Activated CD8-positive, alpha-beta T cell treated with anti-CD3 and anti-CD28 coated beads, Interleukin-2, amount 10 ng/mL, durations not matched to agents 7 days and 5 days (primary cell): ENCODE measurements at regions of chr5 and their contacts with region 1.

Region 1: DNA sequence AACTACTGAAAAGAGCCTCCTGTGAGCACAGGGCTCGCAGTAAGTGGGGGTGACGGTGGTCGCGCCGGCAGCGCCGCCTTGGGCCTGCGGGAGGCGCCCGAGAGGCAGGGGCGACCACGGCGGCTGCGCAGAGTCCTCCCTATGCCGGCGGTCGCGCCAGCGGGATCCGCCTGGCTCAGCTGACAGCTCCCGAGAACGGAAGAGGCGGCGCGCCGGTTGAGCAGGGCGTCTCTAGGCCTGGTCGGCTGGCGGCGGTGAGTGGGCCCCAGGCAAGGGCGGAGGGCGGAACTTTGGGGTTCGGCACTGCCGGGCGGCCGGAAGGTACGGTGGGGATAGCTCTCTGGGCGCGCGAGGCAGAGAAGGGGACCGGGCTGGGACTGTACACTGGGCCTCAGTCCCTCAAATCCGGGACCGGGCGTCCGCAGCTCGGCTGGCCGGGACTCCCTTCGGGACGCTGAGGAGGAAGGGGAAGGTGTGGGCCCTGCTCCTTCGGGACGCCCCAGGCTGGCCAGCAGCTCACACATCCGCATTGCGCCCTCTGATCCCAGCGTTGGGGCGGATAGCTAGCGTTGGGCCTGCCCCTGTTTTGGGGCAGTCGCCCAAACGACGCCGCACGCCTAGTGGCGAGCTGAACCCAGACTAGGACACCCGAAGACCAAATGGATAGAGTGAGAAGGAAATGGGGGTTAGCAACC is at the start of gene RNF14:
- DNase-seq: peak; percentile 96
- ATAC-seq: peak; percentile 98
- H3K4me3 Mint-ChIP-seq: peak within 1 kb of the TSS; percentile 92
- H3K27ac Mint-ChIP-seq: peak within 1 kb of the TSS; percentile 95
- H3K4me1 Mint-ChIP-seq: peaks cover 33% of the 10 kb centered on the region
- H3K27me3 Mint-ChIP-seq: no peaks in the 10 kb centered on the region
- total RNA-seq, gene RNF14: 22.2 to 26.0 TPM

Region 2: DNA sequence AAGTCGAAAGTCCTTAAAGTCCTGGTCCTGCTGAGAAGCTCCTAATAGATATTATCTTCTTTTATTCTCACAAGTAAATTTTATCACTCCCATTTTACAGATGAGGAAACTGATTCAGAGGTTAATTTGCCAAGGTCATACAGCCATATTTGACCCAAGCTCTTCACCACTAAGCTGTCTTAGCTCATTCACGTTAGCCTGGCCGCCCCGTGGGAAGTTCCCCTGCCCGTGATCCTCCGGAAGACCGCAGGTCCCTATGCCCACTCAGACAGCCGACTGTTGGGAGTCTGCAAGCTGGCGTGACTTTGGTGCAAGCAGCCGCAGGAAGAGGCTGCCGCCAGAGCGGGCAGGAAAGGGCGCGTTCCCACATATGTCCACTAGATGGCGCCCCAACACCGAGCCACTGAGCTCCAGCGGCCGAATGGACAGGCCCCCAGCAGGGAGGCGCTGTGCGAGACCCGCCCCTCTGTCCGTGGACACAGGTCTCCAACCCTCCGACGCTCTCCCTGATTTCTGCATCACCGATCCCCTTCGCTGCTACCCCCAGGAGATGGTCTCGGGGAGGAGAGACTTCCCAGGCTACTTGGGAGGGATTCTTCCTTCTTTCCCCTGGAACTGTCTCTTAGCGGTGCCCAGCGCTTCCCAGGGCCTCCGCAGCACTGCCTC is 277.1 kb before region 1 on chr5:
- CTCF ChIA-PET with region 1: interaction called, 52 read pairs
- POLR2A ChIA-PET with region 1: interaction called, 10 read pairs
- DNase-seq: peak; percentile 89
- ATAC-seq: peak; percentile 89
- H3K4me3 Mint-ChIP-seq: peak overlapping the region; percentile 71
- H3K27ac Mint-ChIP-seq: peak overlapping the region; percentile 75
- H3K4me1 Mint-ChIP-seq: peaks cover 28% of the 10 kb centered on the region
- H3K27me3 Mint-ChIP-seq: peaks cover 23% of the 10 kb centered on the region

Region 3: DNA sequence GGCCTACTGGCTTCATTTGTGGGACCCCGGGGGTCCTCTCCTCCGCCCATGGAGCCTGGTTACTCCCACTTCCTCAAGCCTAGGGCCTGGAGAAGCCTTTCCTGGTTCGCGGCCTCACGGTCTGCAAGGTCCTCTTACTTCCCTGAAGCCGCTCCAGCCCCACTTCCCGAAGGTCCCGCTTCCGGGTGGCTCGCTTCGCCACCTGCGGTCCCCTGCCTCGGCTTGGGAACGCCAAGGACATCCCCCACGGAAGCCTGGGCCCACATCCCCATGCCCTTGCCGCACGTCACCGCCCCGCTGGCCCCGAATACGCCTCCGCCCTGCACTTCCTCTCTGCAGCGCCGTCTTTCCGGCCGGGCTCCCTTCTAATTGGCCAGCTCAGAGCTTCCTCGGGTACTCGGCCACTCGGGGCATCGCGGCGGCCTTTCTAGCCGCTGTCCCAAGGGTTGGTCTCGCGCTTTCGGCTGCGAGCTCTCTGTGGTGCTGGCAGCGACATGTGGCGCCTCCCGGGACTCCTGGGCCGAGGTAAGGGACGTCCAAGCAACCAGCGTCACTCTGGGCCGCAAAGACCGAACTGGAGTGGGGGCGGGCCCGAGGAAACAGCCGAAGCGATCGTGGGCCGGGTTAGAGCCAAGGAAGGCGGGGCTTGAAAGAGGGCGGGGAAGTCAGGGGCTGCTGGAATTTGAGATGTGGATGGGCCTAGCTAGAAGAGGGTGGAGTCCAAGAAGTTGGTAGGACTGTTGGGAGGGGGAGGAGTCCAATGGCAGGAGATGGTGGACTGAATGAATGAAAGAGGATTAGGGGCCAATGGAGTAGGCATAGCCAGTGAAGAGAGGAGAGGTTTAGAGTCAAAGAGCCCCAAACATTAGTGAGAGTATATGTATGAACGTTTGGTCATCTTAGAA is 45.4 kb before region 1 on chr5 and contains the start of gene DELE1:
- CTCF ChIA-PET with region 1: interaction called, 18 read pairs
- POLR2A ChIA-PET with region 1: interaction called, 27 read pairs
- DNase-seq: peak; percentile 94
- ATAC-seq: peak; percentile 98
- H3K4me3 Mint-ChIP-seq: peak within 1 kb of the TSS; percentile 91
- H3K27ac Mint-ChIP-seq: peak within 1 kb of the TSS; percentile 93
- H3K4me1 Mint-ChIP-seq: peaks cover 38% of the 10 kb centered on the region
- H3K27me3 Mint-ChIP-seq: no peaks in the 10 kb centered on the region
- total RNA-seq, gene DELE1: 65.7 to 65.8 TPM

Region 4: GRCh38 chr5:141986072-141986471 is 17.0 kb after region 1 on chr5:
- CTCF ChIA-PET with region 1: interaction called, 76 read pairs
- POLR2A ChIA-PET with region 1: interaction called, 5 read pairs
- DNase-seq: no peak
- ATAC-seq: no peak
- H3K4me3 Mint-ChIP-seq: no peak overlapping the region
- H3K27ac Mint-ChIP-seq: no peak overlapping the region
- H3K4me1 Mint-ChIP-seq: peaks cover 8% of the 10 kb centered on the region
- H3K27me3 Mint-ChIP-seq: no peaks in the 10 kb centered on the region

Region 5: GRCh38 chr5:142006363-142007236 is 37.5 kb after region 1 on chr5:
- CTCF ChIA-PET with region 1: interaction called, 79 read pairs
- POLR2A ChIA-PET with region 1: interaction called, 16 read pairs
- DNase-seq: peak; percentile 79
- ATAC-seq: peak; percentile 85
- H3K4me3 Mint-ChIP-seq: peak overlapping the region; percentile 52
- H3K27ac Mint-ChIP-seq: peak overlapping the region; percentile 92
- H3K4me1 Mint-ChIP-seq: peaks cover 74% of the 10 kb centered on the region
- H3K27me3 Mint-ChIP-seq: no peaks in the 10 kb centered on the region

Region 6: GRCh38 chr5:142108432-142109330 is 139.6 kb after region 1 on chr5 and contains the start of gene NDFIP1:
- CTCF ChIA-PET with region 1: interaction called, 16 read pairs
- POLR2A ChIA-PET with region 1: interaction called, 22 read pairs
- DNase-seq: peak; percentile 87
- ATAC-seq: peak; percentile 90
- H3K4me3 Mint-ChIP-seq: peak within 1 kb of the TSS; percentile 93
- H3K27ac Mint-ChIP-seq: peak within 1 kb of the TSS; percentile 93
- H3K4me1 Mint-ChIP-seq: peaks cover 68% of the 10 kb centered on the region
- H3K27me3 Mint-ChIP-seq: no peaks in the 10 kb centered on the region
- total RNA-seq, gene NDFIP1: 47.2 TPM

Region 7: GRCh38 chr5:142296914-142297417 is 327.9 kb after region 1 on chr5:
- CTCF ChIA-PET with region 1: no interaction called
- POLR2A ChIA-PET with region 1: no interaction called
- DNase-seq: no peak
- ATAC-seq: no peak
- H3K4me3 Mint-ChIP-seq: no peak overlapping the region
- H3K27ac Mint-ChIP-seq: no peak overlapping the region
- H3K4me1 Mint-ChIP-seq: peaks cover 8% of the 10 kb centered on the region
- H3K27me3 Mint-ChIP-seq: peaks cover 15% of the 10 kb centered on the region